Upper lobe of right lung (tissue), 1 donor: ENCODE measurements at regions of chr16 and their contacts with region 1.

Region 1: GRCh38 chr16:22214889-22215288 is 8.8 kb downstream of the EEF2K start:
- DNase-seq: no peak
- ATAC-seq: no peak
- H3K4me3 ChIP-seq: no peak overlapping the region
- H3K27ac ChIP-seq: no peak overlapping the region
- H3K4me1 ChIP-seq: peaks cover 29% of the 10 kb centered on the region
- H3K27me3 ChIP-seq: no peaks in the 10 kb centered on the region
- CTCF ChIP-seq: no peak

Region 2: DNA sequence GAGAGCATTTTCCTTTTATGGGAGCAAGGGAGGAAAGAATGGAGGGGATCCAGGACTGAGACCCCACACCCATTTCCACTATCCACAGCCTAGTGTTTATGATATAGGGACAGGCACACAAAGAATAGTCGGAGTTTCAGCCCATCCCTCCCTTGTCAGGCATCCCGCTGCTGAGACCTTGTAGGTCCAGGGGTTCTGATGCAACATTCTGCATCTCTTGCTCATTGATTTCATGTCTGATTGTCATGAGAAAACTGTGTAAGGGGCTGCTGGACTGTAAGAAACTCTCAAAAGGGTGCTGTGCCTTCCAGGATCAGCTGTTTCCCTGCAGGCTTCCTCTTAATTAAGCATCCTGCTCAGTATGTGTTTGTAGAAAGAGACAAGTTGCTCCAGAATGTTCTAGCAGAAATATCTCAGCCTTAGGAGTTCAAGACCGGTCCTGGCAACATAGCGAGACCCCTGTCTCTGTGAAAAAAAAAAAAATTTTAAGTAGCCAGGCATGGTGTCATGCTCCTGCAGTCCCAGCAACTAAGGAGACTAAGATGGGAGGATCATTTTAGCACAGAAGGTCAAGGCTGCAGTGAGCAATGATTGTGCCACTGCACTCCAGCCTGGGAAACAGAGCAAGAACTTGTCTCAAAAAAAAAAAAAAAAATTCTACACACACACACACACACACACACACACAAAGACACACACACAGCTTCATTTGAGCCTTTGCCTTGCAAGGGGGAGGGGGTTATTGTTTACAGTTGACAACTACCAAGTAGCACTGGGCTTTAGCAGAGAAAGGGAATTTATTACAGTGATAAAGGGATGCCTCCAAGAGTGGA is 77.2 kb after region 1 on chr16:
- intact Hi-C with region 1: loop called (anchors 5 kb)
- DNase-seq: no peak
- ATAC-seq: no peak
- H3K4me3 ChIP-seq: no peak overlapping the region
- H3K27ac ChIP-seq: no peak overlapping the region
- H3K4me1 ChIP-seq: no peaks in the 10 kb centered on the region
- H3K27me3 ChIP-seq: no peaks in the 10 kb centered on the region
- CTCF ChIP-seq: no peak